GM13976 (cell line): ENCODE measurements at regions of chrX and their contacts with region 1.

Region 1: DNA sequence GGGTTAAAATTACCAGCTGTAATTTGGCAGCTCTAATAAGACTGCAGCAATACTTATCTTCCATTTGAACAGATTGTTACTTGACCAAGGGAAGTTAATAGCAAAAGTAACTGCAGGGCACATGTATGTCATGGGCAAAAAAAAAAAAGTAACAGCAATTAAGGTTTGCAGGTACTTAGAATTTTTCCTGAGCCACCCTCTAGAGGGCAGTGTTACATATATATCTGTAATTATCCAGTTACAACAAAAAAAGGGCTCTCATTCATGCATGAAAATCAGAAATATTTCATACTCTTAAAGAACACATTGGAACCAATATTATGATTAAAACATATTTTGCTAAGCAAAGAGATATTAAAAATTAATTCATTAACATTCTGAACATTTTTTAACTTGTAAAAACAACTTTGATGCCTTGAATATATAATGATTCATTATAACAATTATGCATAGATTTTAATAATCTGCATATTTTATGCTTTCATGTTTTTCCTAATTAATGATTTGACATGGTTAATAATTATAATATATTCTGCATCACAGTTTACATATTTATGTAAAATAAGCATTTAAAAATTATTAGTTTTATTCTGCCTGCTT is 25.1 kb downstream of the XIAP start:
- DNase-seq: peak; percentile 50
- CTCF ChIP-seq: peak; percentile 41

Region 2: GRCh38 chrX:123943488-123943887 is 58.6 kb after region 1 on chrX:
- in situ Hi-C with region 1: loop called (anchors 10 kb)
- DNase-seq: no peak
- CTCF ChIP-seq: no peak

Region 3: GRCh38 chrX:124151195-124151594 is 266.3 kb after region 1 on chrX:
- in situ Hi-C with region 1: no loop called
- DNase-seq: no peak
- CTCF ChIP-seq: no peak

Region 4: DNA sequence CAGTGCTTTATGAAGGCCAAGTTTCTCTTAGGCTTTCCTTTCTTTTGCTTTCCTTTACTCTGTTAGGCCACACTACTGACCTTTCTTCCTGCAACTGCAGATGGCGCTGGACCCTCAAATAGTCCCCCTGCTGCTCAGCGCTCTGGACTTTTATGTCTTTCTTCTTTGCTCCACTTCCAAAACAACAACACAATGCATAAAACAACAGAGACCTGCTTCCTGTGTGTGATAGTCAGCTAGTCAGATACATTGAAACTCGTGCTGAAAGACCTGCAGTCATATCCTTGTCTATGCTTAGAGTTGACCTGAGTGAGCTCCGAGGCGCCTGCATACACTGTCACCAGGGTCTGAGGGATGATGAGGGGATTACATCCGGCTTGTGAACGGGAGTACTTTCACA is 338.6 kb after region 1 on chrX:
- in situ Hi-C with region 1: no loop called
- DNase-seq: no peak
- CTCF ChIP-seq: no peak

Region 5: DNA sequence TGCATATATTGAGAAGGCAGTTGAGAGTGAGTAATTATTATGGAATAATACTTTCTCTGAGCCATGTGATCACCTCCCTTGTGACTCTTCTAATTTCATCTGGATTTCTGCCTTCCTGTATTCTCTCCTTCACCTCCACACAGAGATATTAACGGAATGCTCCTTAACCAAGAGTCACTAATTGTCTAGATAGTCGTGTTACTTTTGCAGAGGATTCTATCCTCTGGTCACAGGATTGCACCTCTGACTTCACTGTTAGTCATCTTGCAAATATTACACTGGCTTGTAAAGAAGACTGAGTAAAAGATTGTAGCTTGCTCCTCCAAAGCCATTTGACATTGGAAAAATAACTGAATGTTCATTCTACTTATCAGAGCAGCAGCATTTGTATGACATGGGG is 622.3 kb after region 1 on chrX:
- in situ Hi-C with region 1: no loop called
- DNase-seq: no peak
- CTCF ChIP-seq: no peak